SK-N-SH (cell line): ENCODE measurements at regions of chr5 and their contacts with region 1.

Region 1: GRCh38 chr5:114089259-114089658 is 272.6 kb upstream of the KCNN2 start:
- DNase-seq: no peak
- H3K4me3 ChIP-seq: no peak overlapping the region
- H3K27ac ChIP-seq: no peak overlapping the region
- H3K4me1 ChIP-seq: no peaks in the 10 kb centered on the region
- H3K27me3 ChIP-seq: no peaks in the 10 kb centered on the region
- CTCF ChIP-seq: no peak
- EP300 ChIP-seq: no peak
- RAD21 ChIP-seq: no peak

Region 2: DNA sequence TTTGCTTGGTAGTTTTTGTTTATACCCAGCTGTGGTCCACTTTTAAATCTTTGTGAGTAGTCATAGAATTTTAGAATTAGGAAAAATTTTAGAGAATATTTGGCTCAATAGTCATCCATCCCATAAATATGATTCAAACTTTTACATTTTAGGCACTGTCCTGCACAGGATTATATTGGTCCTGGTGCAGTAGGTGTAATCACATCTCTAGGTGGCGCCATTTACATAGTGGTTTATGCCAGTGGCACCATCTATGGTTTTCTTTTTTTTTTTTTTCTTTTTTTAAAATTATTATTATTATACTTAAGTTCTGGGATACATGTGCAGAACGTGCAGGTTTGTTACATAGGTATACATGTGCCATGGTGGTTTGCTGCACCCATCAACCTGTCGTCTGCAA is 11.9 kb after region 1 on chr5:
- CTCF ChIA-PET with region 1: interaction called, 12 read pairs
- POLR2A ChIA-PET with region 1: no interaction called
- DNase-seq: peak; percentile 12
- H3K4me3 ChIP-seq: no peak overlapping the region
- H3K27ac ChIP-seq: no peak overlapping the region
- H3K4me1 ChIP-seq: no peaks in the 10 kb centered on the region
- H3K27me3 ChIP-seq: no peaks in the 10 kb centered on the region
- CTCF ChIP-seq: peak; percentile 68
- EP300 ChIP-seq: no peak
- RAD21 ChIP-seq: peak; percentile 59

Region 3: GRCh38 chr5:114305402-114306211 is 216.3 kb after region 1 on chr5:
- CTCF ChIA-PET with region 1: no interaction called
- POLR2A ChIA-PET with region 1: no interaction called
- DNase-seq: no peak
- H3K4me3 ChIP-seq: peak overlapping the region in 1 of 2 experiments; percentile 11; a peak in 1 of 4 replicates
- H3K27ac ChIP-seq: no peak overlapping the region
- H3K4me1 ChIP-seq: no peaks in the 10 kb centered on the region
- H3K27me3 ChIP-seq: no peaks in the 10 kb centered on the region
- CTCF ChIP-seq: peak; percentile 48
- EP300 ChIP-seq: no peak
- RAD21 ChIP-seq: peak; percentile 35